ENCODE measurements at regions of chr21 and their contacts with region 1.

Region 1: GRCh38 chr21:33360881-33361602 is 36.3 kb downstream of the IFNAR1 start:
- DNase-seq: peak; percentile 65 to 92 (median 82)
- ATAC-seq: peak; percentile 65 to 72 (median 68)
- H3K4me3 ChIP-seq: peak overlapping the region; percentile 46 to 56
- H3K4me3 Mint-ChIP-seq: peak overlapping the region; percentile 82 to 84 (median 83)
- H3K27ac ChIP-seq: peak overlapping the region; percentile 69
- H3K27ac Mint-ChIP-seq: peak overlapping the region; percentile 67 to 81
- H3K4me1 ChIP-seq: peaks cover 0 to 15% of the 10 kb centered on the region in 2 experiments
- H3K4me1 Mint-ChIP-seq: peaks cover 20 to 21% (median 21%) of the 10 kb centered on the region in 3 donors
- H3K27me3 ChIP-seq: no peaks in the 10 kb centered on the region
- H3K27me3 Mint-ChIP-seq: no peaks in the 10 kb centered on the region

Region 2: GRCh38 chr21:33324291-33325221 is 36.5 kb before region 1 on chr21 and contains the start of gene IFNAR1:
- CTCF ChIA-PET with region 1: interaction called, 7 to 61 read pairs
- POLR2A ChIA-PET with region 1: interaction called, 12 to 42 read pairs
- DNase-seq: peak; percentile 94 to 100 (median 98)
- ATAC-seq: peak; percentile 88 to 94 (median 91)
- H3K4me3 ChIP-seq: peak within 1 kb of the TSS; percentile 67 to 97
- H3K4me3 Mint-ChIP-seq: no peak within 1 kb of the TSS
- H3K27ac ChIP-seq: peak within 1 kb of the TSS; percentile 92
- H3K27ac Mint-ChIP-seq: no peak within 1 kb of the TSS
- H3K4me1 ChIP-seq: peaks cover 19 to 23% of the 10 kb centered on the region in 2 experiments
- H3K4me1 Mint-ChIP-seq: peaks cover 29 to 32% (median 30%) of the 10 kb centered on the region in 3 donors
- H3K27me3 ChIP-seq: no peaks in the 10 kb centered on the region
- H3K27me3 Mint-ChIP-seq: no peaks in the 10 kb centered on the region
- total RNA-seq, gene IFNAR1: 22.1 to 51.1 (median 45.6) TPM

Region 3: DNA sequence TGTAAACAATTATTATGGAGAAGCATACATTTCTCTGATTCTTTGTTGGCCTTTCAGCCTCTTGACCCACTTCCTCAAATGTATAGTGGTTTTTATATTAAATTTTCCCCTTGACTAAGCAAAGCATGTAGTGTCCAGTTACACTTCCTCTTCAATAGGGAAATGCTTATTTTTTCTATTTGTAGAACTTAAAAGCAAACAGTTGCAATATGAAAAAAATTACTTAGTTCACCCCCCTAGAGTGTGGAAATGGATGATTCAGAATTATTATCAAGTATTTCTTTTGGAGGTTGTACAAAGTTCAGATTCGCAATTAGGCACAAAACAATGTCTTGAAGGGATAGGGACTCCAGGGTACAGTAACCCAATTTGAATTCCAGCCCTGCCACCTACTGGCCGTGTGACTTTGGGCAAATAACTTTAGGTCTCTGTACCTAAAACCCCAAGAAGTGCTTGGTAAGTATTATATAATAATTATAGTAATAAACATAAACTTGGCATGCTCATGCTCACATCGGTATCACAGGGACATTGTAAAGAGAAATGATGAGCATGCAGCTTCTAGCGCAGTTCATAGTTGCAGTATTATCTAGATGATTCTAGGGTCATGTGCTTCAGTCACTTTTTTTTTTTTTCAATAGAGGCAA is 13.5 kb after region 1 on chr21:
- CTCF ChIA-PET with region 1: interaction called, 17 to 19 read pairs
- POLR2A ChIA-PET with region 1: interaction called, 3 read pairs
- DNase-seq: peak in 29 of 35 experiments; percentile 17 to 74 (median 44)
- ATAC-seq: peak; percentile 75 to 85 (median 80)
- H3K4me3 ChIP-seq: no peak overlapping the region
- H3K4me3 Mint-ChIP-seq: no peak overlapping the region
- H3K27ac ChIP-seq: no peak overlapping the region
- H3K27ac Mint-ChIP-seq: peak overlapping the region in 1 of 2 donors; percentile 43
- H3K4me1 ChIP-seq: peaks cover 2 to 11% of the 10 kb centered on the region in 2 experiments
- H3K4me1 Mint-ChIP-seq: peaks cover 8 to 36% (median 9%) of the 10 kb centered on the region in 3 donors
- H3K27me3 ChIP-seq: peaks cover 0 to 30% of the 10 kb centered on the region in 2 experiments
- H3K27me3 Mint-ChIP-seq: peaks cover 0 to 10% of the 10 kb centered on the region in 2 donors

Region 4: DNA sequence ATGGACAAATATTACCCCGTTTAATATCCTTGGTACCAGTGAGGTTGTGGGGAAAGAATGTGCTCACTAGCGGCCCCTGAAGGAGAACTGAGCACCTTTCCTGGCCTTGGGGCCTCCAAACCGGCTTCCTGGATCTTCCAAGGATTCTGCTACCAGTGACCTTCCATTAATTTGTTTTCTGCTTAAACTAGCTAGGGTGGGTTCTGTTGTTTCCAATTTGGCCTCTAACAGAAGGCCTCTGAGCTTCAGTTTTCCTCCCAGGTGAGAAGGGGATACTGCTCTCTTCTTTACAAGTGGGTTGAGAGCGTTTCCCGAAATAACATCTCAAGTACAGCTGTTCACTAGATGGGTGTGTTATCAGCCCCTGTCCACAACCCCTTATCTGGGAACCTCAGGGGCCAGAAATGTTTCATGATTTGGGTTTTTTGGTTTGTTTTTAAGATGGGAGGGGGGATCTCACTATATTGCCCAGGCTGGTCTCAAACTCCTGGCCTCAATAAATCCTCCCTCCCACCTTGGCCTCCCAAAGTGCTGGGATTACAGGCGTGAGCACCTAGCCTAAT is 25.3 kb after region 1 on chr21:
- CTCF ChIA-PET with region 1: interaction called, 8 to 21 read pairs
- POLR2A ChIA-PET with region 1: interaction called, 4 to 13 read pairs
- DNase-seq: no peak
- ATAC-seq: no peak
- H3K4me3 ChIP-seq: no peak overlapping the region
- H3K4me3 Mint-ChIP-seq: no peak overlapping the region
- H3K27ac ChIP-seq: no peak overlapping the region
- H3K27ac Mint-ChIP-seq: no peak overlapping the region
- H3K4me1 ChIP-seq: peaks cover 31 to 42% of the 10 kb centered on the region in 2 experiments
- H3K4me1 Mint-ChIP-seq: peaks cover 43 to 51% (median 46%) of the 10 kb centered on the region in 3 donors
- H3K27me3 ChIP-seq: peaks cover 0 to 51% of the 10 kb centered on the region in 2 experiments
- H3K27me3 Mint-ChIP-seq: peaks cover 0 to 7% of the 10 kb centered on the region in 2 donors

Region 5: GRCh38 chr21:33441489-33442477 is 80.7 kb after region 1 on chr21:
- CTCF ChIA-PET with region 1: interaction called, 4 to 20 read pairs
- POLR2A ChIA-PET with region 1: interaction called in 1 of 2 experiments, 6 read pairs
- DNase-seq: no peak
- ATAC-seq: no peak
- H3K4me3 ChIP-seq: no peak overlapping the region
- H3K4me3 Mint-ChIP-seq: no peak overlapping the region
- H3K27ac ChIP-seq: no peak overlapping the region
- H3K27ac Mint-ChIP-seq: no peak overlapping the region
- H3K4me1 ChIP-seq: no peaks in the 10 kb centered on the region
- H3K4me1 Mint-ChIP-seq: peaks cover 4 to 16% (median 7%) of the 10 kb centered on the region in 3 donors
- H3K27me3 ChIP-seq: no peaks in the 10 kb centered on the region
- H3K27me3 Mint-ChIP-seq: no peaks in the 10 kb centered on the region

Region 6: GRCh38 chr21:33634254-33634653 is 273.2 kb after region 1 on chr21:
- CTCF ChIA-PET with region 1: no interaction called
- POLR2A ChIA-PET with region 1: no interaction called
- DNase-seq: no peak
- ATAC-seq: no peak
- H3K4me3 ChIP-seq: no peak overlapping the region
- H3K4me3 Mint-ChIP-seq: no peak overlapping the region
- H3K27ac ChIP-seq: no peak overlapping the region
- H3K27ac Mint-ChIP-seq: no peak overlapping the region
- H3K4me1 ChIP-seq: no peaks in the 10 kb centered on the region
- H3K4me1 Mint-ChIP-seq: peaks cover 20 to 28% (median 28%) of the 10 kb centered on the region in 3 donors
- H3K27me3 ChIP-seq: no peaks in the 10 kb centered on the region
- H3K27me3 Mint-ChIP-seq: no peaks in the 10 kb centered on the region

Region 7: DNA sequence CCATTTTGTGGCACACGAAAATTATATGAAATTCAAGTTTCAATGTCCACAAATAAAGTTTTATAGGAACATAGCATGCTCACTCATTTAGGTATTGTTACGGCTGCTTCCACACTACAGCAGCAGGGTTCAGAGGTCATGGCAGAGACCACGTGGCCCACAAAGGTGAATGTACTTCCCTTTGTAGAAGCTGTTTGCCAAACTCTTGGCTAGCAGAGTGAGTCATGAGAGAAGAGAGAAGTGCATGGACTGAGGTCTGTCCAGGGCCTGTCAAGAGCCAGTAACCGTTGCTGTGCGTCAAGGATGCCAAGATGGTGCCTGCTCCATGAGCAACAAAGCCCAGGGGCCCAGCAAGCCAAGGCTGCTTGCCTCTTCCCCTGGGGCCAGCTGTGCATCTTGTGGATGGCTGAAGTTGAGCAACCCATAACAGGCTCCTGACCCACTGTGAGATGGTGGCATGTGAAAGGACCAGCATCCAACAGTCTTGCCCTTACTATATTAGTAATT is 619.3 kb after region 1 on chr21:
- CTCF ChIA-PET with region 1: no interaction called
- POLR2A ChIA-PET with region 1: no interaction called
- DNase-seq: no peak
- ATAC-seq: no peak
- H3K4me3 ChIP-seq: no peak overlapping the region
- H3K4me3 Mint-ChIP-seq: no peak overlapping the region
- H3K27ac ChIP-seq: no peak overlapping the region
- H3K27ac Mint-ChIP-seq: no peak overlapping the region
- H3K4me1 ChIP-seq: peaks cover 14 to 31% of the 10 kb centered on the region in 2 experiments
- H3K4me1 Mint-ChIP-seq: peaks cover 46 to 52% (median 51%) of the 10 kb centered on the region in 3 donors
- H3K27me3 ChIP-seq: peaks cover 0 to 3% of the 10 kb centered on the region in 2 experiments
- H3K27me3 Mint-ChIP-seq: no peaks in the 10 kb centered on the region

Measured in T-cell (primary cell).